Astrocyte of the cerebellum (primary cell): ENCODE measurements at regions of chr5 and their contacts with region 1.

Region 1: DNA sequence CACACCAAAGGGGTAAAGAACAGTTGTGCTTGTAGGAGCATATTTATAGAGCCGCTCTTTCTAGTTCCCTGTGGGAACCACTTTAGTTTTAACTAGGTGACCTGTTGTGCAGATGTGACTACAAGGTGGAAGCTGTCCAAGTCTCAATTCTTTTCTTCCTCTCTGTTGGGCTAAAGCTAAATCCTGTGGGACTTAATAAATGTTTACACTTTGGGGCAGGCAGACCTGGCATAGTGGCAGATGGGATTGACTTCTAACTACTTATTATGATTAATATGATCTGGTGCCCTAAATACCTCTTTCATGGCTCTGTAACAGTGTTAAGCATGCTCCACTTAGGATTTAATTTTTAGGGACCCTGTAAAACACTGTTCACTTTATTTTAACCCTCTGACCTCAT is 265.3 kb downstream of the KCTD16 start:
- DNase-seq: no peak
- H3K4me3 ChIP-seq: no peak overlapping the region
- CTCF ChIP-seq: no peak

Region 2: GRCh38 chr5:144308906-144309670 is 126.9 kb before region 1 on chr5:
- in situ Hi-C with region 1: no loop called
- DNase-seq: no peak
- H3K4me3 ChIP-seq: no peak overlapping the region
- CTCF ChIP-seq: no peak

Region 3: GRCh38 chr5:144484124-144484897 is 48.3 kb after region 1 on chr5:
- in situ Hi-C with region 1: loop called (anchors 5 kb)
- DNase-seq: peak; percentile 27
- H3K4me3 ChIP-seq: no peak overlapping the region
- CTCF ChIP-seq: no peak

Region 4: GRCh38 chr5:144522698-144523097 is 86.7 kb after region 1 on chr5:
- in situ Hi-C with region 1: no loop called
- DNase-seq: no peak
- H3K4me3 ChIP-seq: no peak overlapping the region
- CTCF ChIP-seq: no peak